ENCODE measurements at regions of chr15 and their contacts with region 1.

Region 1: GRCh38 chr15:31128919-31129768 is 27.6 kb upstream of the TRPM1 start:
- DNase-seq: peak; percentile 82
- H3K4me3 ChIP-seq: no peak overlapping the region
- H3K27ac ChIP-seq: no peak overlapping the region
- H3K4me1 ChIP-seq: peaks cover 0 to 5% (median 0%) of the 10 kb centered on the region in 4 donors
- H3K27me3 ChIP-seq: peaks cover 0 to 10% (median 0%) of the 10 kb centered on the region in 3 donors
- CTCF ChIP-seq: peak; percentile 21 to 92 (median 78)
- EP300 ChIP-seq: no peak
- POLR2A ChIP-seq: no peak

Region 2: GRCh38 chr15:31200735-31201151 is 71.6 kb after region 1 on chr15:
- intact Hi-C with region 1: loop called (anchors 10 kb)
- DNase-seq: peak; percentile 85
- H3K4me3 ChIP-seq: no peak overlapping the region
- H3K27ac ChIP-seq: no peak overlapping the region
- H3K4me1 ChIP-seq: peaks cover 0 to 27% (median 2%) of the 10 kb centered on the region in 4 donors
- H3K27me3 ChIP-seq: no peaks in the 10 kb centered on the region
- CTCF ChIP-seq: peak in 2 of 4 experiments; percentile 26 to 38
- EP300 ChIP-seq: no peak
- POLR2A ChIP-seq: no peak

Region 3: DNA sequence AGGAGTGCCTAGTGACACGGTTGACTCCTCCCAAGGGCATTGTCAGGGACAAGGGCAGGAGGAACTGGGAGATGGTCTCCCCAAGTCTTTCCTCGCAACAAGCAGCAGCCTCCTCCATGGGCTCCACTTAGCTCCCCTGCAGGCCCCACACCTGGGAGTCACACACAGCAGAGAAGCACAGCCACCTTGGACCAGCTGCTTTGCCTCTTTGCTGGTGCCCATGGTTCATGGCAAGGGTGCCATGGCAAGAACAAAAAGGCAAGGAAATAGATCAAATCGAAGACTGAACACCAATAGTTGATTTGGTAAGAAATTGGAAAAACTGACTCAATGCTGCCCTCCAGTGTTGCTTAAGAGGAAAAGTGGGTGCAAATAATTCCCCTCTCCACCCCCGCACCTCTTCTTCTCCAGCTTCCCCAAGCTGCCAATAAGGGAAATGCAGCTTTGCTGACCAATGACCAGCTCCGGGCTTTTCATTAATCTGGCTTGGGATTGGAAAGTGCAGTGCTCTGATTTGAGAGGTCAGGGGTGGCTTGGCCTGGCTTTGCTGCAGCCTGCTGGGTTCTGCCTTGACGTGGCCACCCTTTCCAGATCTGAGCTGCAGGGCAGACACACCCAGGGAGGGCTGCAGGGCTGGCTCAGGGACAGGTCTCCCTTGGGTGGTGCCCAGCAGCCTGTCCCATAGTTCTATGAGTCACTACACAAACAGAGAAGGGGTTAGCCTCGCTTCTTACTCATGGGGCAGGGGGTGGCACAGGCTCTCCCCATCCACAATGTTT is 359.5 kb after region 1 on chr15:
- intact Hi-C with region 1: loop called (anchors 2 kb)
- DNase-seq: peak; percentile 87
- H3K4me3 ChIP-seq: no peak overlapping the region
- H3K27ac ChIP-seq: peak overlapping the region in 3 of 4 donors; percentile 26 to 60 (median 45)
- H3K4me1 ChIP-seq: peaks cover 0 to 20% (median 16%) of the 10 kb centered on the region in 4 donors
- H3K27me3 ChIP-seq: peaks cover 0 to 18% (median 5%) of the 10 kb centered on the region in 3 donors
- CTCF ChIP-seq: peak; percentile 77 to 95 (median 84)
- EP300 ChIP-seq: no peak
- POLR2A ChIP-seq: no peak